Endothelial cell of umbilical vein (primary cell): ENCODE measurements at regions of chr10 and their contacts with region 1.

Region 1: DNA sequence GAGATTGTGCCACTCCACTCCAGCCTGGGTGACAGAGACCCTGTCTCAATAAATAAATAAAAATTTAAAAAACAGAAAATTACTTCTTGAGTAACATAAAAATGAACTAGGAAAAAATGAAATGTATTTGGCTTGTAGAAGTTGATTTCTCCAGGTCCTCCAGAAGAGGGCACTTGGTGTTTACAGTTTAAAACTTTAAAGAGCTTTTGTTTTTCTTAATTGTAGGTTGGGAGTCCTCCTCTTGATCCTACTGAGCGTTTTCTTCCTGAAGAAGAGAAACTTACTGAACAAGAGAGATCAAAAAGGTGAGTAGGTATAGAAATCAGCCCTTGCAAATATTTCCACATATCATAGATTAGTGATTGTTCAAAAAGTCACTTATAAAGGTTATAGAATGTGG is 16.2 kb downstream of the KIFBP start:
- DNase-seq: peak; percentile 61
- H3K4me3 ChIP-seq: no peak overlapping the region
- H3K27ac ChIP-seq: no peak overlapping the region
- H3K4me1 ChIP-seq: no peaks in the 10 kb centered on the region
- H3K27me3 ChIP-seq: no peaks in the 10 kb centered on the region
- CTCF ChIP-seq: peak; percentile 38
- POLR2A ChIP-seq: no peak

Region 2: GRCh38 chr10:68303849-68304412 is 700.9 kb before region 1 on chr10:
- CTCF ChIA-PET with region 1: no interaction called
- POLR2A ChIA-PET with region 1: no interaction called
- dilution Hi-C with region 1: no loop called
- intact Hi-C with region 1: no loop called
- DNase-seq: no peak
- H3K4me3 ChIP-seq: no peak overlapping the region
- H3K27ac ChIP-seq: no peak overlapping the region
- H3K4me1 ChIP-seq: peaks cover 3% of the 10 kb centered on the region
- H3K27me3 ChIP-seq: no peaks in the 10 kb centered on the region
- CTCF ChIP-seq: no peak
- POLR2A ChIP-seq: no peak

Region 3: GRCh38 chr10:68988530-68989316 is 16.1 kb before region 1 on chr10 and contains the start of gene KIFBP:
- CTCF ChIA-PET with region 1: interaction called, 10 read pairs
- POLR2A ChIA-PET with region 1: no interaction called
- dilution Hi-C with region 1: no loop called
- intact Hi-C with region 1: no loop called
- DNase-seq: peak; percentile 99
- H3K4me3 ChIP-seq: peak within 1 kb of the TSS; percentile 71 to 84 (median 84)
- H3K27ac ChIP-seq: peak within 1 kb of the TSS; percentile 20
- H3K4me1 ChIP-seq: peaks cover 25% of the 10 kb centered on the region
- H3K27me3 ChIP-seq: no peaks in the 10 kb centered on the region
- CTCF ChIP-seq: peak; percentile 44 to 61
- POLR2A ChIP-seq: peak; percentile 90
- total RNA-seq, gene KIFBP: 37.3 and 39.8 TPM in 2 replicates

Region 4: GRCh38 chr10:69073026-69073425 is 68.2 kb after region 1 on chr10:
- CTCF ChIA-PET with region 1: interaction called, 16 read pairs
- POLR2A ChIA-PET with region 1: no interaction called
- dilution Hi-C with region 1: no loop called
- intact Hi-C with region 1: no loop called
- DNase-seq: no peak
- H3K4me3 ChIP-seq: no peak overlapping the region
- H3K27ac ChIP-seq: no peak overlapping the region
- H3K4me1 ChIP-seq: peaks cover 3% of the 10 kb centered on the region
- H3K27me3 ChIP-seq: no peaks in the 10 kb centered on the region
- CTCF ChIP-seq: no peak
- POLR2A ChIP-seq: no peak

Region 5: GRCh38 chr10:69092959-69093850 is 88.4 kb after region 1 on chr10:
- CTCF ChIA-PET with region 1: interaction called, 298 read pairs
- POLR2A ChIA-PET with region 1: interaction called, 7 read pairs
- dilution Hi-C with region 1: no loop called
- intact Hi-C with region 1: loop called (anchors 1 kb)
- DNase-seq: peak; percentile 85
- H3K4me3 ChIP-seq: no peak overlapping the region
- H3K27ac ChIP-seq: no peak overlapping the region
- H3K4me1 ChIP-seq: peaks cover 33% of the 10 kb centered on the region
- H3K27me3 ChIP-seq: no peaks in the 10 kb centered on the region
- CTCF ChIP-seq: peak; percentile 54 to 55
- POLR2A ChIP-seq: no peak

Region 6: GRCh38 chr10:69101451-69102095 is 96.8 kb after region 1 on chr10:
- CTCF ChIA-PET with region 1: interaction called, 298 read pairs
- POLR2A ChIA-PET with region 1: no interaction called
- dilution Hi-C with region 1: no loop called
- intact Hi-C with region 1: no loop called
- DNase-seq: peak; percentile 46
- H3K4me3 ChIP-seq: no peak overlapping the region
- H3K27ac ChIP-seq: peak overlapping the region; percentile 82
- H3K4me1 ChIP-seq: peaks cover 17% of the 10 kb centered on the region
- H3K27me3 ChIP-seq: no peaks in the 10 kb centered on the region
- CTCF ChIP-seq: no peak
- POLR2A ChIP-seq: no peak

Region 7: GRCh38 chr10:69160809-69161241 is 156.0 kb after region 1 on chr10:
- CTCF ChIA-PET with region 1: interaction called, 11 read pairs
- POLR2A ChIA-PET with region 1: no interaction called
- dilution Hi-C with region 1: no loop called
- intact Hi-C with region 1: no loop called
- DNase-seq: no peak
- H3K4me3 ChIP-seq: no peak overlapping the region
- H3K27ac ChIP-seq: no peak overlapping the region
- H3K4me1 ChIP-seq: no peaks in the 10 kb centered on the region
- H3K27me3 ChIP-seq: no peaks in the 10 kb centered on the region
- CTCF ChIP-seq: no peak
- POLR2A ChIP-seq: no peak

Region 8: DNA sequence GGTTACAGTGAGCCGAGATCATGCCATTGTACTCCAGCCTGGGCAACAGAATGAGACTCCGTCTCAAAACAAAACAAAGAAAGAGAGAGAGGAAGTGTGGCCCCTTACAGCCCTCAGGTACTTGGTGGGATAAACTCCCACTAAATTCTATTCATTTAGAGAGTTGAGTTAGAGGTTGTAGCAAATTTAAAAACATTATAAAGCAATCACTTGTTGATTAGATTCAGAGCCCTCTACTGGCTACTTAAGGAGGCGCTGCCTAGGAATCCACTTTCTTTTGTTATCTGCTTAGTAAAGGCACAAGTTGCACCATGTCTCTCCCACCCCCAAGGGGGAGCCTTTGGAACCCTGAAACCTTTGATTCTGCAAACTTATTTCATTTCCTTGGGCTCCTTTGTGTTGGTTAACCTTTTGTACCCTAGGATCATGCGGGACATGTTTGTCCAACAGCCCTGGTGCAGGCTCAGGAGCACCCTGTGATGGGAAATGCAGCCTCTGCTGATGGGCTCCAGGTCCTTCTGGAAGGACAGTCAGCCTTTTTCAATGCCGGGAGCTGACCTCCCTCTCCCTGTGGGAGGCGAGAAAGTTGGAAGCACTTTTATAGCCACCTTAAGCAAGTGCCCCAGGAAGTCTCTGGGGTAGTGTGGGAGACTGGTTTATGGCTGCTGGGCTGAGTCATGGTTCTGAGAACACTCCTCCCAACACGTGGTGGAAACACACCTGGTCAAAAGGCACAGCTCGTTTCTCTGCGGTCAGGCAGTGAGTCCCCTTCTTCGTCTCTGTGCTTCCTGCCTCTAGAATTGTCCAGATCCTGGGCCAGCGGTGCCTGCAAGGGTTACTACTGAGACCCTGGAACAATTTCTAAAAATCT is 217.6 kb after region 1 on chr10:
- CTCF ChIA-PET with region 1: interaction called, 4 read pairs
- POLR2A ChIA-PET with region 1: no interaction called
- dilution Hi-C with region 1: no loop called
- intact Hi-C with region 1: loop called (anchors 5 kb)
- DNase-seq: peak; percentile 73
- H3K4me3 ChIP-seq: no peak overlapping the region
- H3K27ac ChIP-seq: peak overlapping the region; percentile 3
- H3K4me1 ChIP-seq: peaks cover 22% of the 10 kb centered on the region
- H3K27me3 ChIP-seq: no peaks in the 10 kb centered on the region
- CTCF ChIP-seq: peak; percentile 60 to 69
- POLR2A ChIP-seq: no peak